ENCODE measurements at regions of chr19 and their contacts with region 1.

Region 1: DNA sequence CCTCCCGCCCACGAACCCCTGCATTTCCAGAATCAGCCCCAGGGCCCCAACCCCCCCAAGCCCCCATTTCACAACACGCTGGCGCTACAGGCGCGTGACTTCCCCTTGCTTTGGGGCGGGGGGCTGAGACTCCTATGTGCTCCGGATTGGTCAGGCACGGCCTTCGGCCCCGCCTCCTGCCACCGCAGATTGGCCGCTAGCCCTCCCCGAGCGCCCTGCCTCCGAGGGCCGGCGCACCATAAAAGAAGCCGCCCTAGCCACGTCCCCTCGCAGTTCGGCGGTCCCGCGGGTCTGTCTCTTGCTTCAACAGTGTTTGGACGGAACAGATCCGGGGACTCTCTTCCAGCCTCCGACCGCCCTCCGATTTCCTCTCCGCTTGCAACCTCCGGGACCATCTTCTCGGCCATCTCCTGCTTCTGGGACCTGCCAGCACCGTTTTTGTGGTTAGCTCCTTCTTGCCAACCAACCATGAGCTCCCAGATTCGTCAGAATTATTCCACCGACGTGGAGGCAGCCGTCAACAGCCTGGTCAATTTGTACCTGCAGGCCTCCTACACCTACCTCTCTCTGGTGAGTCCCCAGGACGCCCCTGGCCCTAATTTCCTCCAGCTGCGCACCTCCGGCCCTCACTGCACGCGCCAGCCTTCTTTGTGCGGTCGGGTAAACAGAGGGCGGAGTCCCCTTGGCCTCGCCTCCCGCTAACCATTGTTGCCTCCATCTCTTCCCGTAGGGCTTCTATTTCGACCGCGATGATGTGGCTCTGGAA is at the start of gene FTL:
- DNase-seq: peak; percentile 97
- CTCF ChIP-seq: no peak

Region 2: GRCh38 chr19:48881741-48882657 is 83.2 kb before region 1 on chr19:
- CTCF ChIA-PET with region 1: interaction called, 17 read pairs
- POLR2A ChIA-PET with region 1: interaction called, 16 read pairs
- DNase-seq: no peak
- CTCF ChIP-seq: no peak

Region 3: DNA sequence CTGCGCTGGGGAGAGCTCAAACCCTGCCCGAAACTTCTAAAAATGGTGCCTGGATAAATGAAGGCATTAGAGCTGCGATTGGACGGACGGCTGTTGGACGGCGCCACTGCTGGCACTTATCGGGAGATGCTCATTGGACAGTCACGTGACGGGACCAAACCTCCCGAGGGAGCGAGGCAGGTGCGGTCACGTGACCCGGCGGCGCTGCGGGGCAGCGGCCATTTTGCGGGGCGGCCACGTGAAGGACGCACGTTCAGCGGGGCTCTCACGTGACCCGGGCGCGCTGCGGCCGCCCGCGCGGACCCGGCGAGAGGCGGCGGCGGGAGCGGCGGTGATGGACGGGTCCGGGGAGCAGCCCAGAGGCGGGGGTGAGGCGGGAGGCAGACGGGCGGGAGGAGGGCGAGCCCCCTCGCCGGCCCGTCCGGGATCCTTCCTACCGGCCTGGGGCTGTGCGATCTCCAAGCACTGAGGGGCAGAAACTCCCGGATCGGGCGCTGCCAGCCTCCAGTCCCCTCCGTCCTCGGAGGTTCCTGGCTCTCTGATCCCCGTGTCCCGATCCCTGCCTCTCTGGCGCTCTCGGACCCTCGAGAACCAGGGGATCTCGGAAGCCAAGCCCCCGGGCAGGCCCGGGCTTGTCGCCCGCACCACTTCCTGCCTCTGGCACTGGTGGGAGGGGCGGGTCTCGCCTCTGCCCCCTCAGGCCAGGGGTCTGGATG is 10.5 kb before region 1 on chr19 and contains the start of gene BAX:
- CTCF ChIA-PET with region 1: interaction called, 11 read pairs
- POLR2A ChIA-PET with region 1: interaction called, 14 read pairs
- DNase-seq: peak; percentile 98
- CTCF ChIP-seq: no peak

Region 4: DNA sequence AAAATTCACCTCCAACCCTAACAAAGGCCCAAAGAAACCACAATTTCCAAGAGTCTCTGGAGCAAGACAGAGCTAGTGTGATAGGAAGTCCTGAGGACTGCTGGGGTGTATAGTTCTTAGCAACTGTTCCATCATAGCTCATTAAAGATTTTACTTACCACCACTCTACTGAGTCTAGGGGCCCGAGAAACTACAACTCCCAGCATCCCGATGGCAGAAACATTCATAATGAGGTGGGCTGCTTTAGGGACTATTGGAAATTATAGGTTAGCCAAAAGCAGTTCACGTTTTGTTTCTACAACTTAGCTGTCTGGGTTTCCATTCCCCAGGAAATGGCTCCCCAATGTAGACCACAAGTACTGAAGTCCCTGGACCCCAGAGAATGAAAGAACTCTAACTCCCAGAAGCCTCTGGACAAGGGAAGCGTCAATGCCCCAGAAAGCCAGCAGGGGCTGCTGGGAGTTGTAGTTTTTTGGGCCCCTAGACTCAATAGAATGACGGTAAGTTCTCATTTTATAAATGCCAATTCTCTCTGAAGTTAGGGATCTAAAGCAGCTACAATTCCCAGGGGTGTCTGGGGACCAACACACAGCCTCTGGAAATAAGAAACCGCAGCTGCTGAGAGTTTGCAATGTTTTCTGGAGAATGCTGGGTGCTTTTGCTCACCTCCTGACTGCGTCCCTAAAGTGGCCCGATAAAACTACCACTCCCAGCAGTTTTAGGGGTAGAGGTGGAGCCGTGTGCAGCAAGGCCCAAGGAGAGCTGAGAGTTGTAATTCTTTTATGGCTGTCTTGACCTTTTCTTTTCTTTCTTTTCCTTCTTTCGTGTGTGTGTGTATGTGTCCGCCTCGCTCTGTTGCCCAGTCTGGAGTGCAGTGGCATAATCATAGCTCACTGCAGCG is 11.0 kb after region 1 on chr19:
- CTCF ChIA-PET with region 1: interaction called, 47 read pairs
- POLR2A ChIA-PET with region 1: interaction called, 28 read pairs
- DNase-seq: no peak
- CTCF ChIP-seq: no peak

Region 5: DNA sequence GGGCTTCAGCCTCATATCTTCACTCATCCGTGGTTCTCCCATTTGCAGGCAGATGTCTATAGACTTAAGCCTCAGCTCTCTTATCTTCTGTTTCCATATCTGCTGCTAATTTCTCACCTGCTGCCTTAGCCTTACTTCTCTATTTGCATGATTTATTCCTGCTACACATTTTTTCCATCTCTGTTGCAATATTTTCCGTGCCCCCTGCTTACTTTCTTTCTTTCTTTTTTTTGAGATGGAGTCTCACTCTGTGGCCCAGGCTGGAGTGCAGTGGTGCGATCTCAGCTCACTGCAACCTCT is 22.1 kb after region 1 on chr19:
- CTCF ChIA-PET with region 1: interaction called, 53 read pairs
- POLR2A ChIA-PET with region 1: interaction called, 29 read pairs
- DNase-seq: no peak
- CTCF ChIP-seq: no peak

Measured in GM10248 (cell line).